ENCODE measurements at regions of chr12 and their contacts with region 1.

Region 1: DNA sequence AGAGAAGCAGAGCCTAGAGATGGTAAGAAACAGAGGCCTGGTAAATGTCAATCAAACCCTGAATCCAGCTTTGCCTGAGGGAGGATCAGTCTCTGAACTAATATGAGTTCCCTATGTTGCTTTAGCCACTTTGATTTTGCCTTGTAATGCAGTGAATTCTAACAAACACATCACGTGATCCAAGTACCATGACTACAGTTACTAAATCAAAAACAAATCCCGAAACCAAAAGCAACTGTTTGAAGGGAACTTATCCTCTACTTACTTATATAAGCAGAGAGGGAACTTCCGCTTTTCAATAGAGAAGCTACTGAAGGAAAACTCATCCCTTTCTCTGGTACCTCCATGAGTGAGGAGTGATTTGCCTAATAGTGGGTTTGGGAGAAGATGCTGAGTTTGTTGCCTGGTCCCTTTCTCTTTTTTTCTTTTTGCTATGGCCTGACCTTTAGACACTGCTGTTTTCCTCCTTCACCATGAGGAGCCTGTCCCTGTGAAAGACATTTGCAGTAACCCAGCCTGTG is 7.7 kb upstream of the PPTC7 start:
- DNase-seq: no peak
- H3K4me3 ChIP-seq: no peak overlapping the region
- H3K27ac ChIP-seq: peak overlapping the region; percentile 33; the same call in 1 of the 2 replicates
- H3K4me1 ChIP-seq: peaks cover 25% of the 10 kb centered on the region
- H3K27me3 ChIP-seq: no peaks in the 10 kb centered on the region
- CTCF ChIP-seq: no peak

Region 2: GRCh38 chr12:110444455-110444854 is 146.4 kb before region 1 on chr12:
- CTCF ChIA-PET with region 1: no interaction called
- POLR2A ChIA-PET with region 1: no interaction called
- intact Hi-C with region 1: no loop called
- DNase-seq: no peak
- H3K4me3 ChIP-seq: no peak overlapping the region
- H3K27ac ChIP-seq: no peak overlapping the region
- H3K4me1 ChIP-seq: 0 out of 2 replicates have a peak, but pooled peaks cover 4% of the 10 kb centered on the region
- H3K27me3 ChIP-seq: no peaks in the 10 kb centered on the region
- CTCF ChIP-seq: no peak

Region 3: DNA sequence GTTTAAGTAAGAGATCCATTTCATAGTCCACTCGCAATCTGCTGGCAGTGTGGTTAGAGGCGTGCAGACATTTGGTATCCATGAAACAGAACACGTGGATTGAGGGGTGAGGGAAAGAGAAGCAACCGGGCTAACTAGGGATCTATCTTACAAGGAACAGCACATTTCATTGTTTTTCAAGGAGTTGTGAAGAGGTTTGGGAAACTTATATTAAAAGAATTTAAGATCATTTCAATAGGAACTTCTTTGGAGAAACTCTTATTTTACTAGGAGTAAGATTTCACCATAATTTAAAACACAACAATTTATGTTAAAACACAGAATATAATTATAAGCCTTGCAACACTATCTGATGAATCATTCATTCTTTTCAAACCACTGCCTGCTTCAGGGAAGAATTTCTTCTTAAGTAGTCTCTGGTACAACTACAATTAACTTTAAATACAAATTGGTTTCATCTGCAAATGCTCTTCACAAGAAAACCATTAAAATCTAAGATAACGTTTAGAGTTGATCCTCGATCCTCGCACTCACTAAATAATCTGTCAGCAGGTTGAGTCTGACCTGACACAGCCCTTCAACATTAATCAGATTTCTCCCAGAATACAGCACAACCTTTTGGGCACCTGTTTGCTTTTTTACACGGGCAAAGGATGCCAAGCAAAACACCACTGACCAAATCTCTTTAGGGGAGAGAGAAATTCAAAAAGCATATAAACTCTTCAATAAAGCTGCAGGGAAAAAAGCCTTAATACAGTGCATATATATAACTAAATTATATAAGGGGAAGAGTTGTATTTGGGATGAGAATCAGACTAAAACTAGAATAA is 35.1 kb before region 1 on chr12:
- CTCF ChIA-PET with region 1: no interaction called
- POLR2A ChIA-PET with region 1: no interaction called
- intact Hi-C with region 1: loop called (anchors 5 kb)
- DNase-seq: peak in 1 of 2 experiments; percentile 43
- H3K4me3 ChIP-seq: no peak overlapping the region
- H3K27ac ChIP-seq: peak overlapping the region; percentile 58
- H3K4me1 ChIP-seq: peaks cover 24% of the 10 kb centered on the region
- H3K27me3 ChIP-seq: no peaks in the 10 kb centered on the region
- CTCF ChIP-seq: no peak

Region 4: DNA sequence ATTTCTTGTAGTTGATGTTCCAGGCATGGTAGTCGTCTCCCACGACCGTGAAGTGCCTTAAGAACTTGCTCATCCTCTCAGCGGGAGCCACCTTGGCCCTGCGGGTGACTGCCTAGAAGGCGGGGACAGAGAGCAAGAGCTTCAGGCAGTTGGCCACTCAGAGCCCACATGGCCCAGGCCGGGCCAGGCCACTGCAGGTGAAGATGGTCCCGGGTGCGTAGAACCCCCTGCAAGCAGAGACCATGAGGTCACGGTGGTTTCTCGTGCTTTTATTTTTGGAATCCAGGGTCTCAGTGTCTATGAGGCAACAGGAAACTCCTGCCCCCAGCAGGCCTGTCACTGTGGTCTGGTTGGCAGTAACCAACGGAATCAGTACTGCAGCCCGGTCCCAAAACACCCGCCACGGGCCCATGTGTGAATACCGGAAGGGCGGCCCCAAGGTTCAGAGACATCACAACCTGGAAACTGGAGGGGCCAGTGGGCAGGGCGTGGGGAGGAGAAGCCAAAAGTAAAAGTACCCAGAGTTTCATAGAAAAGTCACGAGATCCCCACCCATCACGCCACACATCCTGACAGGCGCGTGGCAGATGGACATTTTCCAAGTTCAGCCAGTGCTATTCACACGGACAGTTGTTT is 70.6 kb after region 1 on chr12:
- CTCF ChIA-PET with region 1: no interaction called
- POLR2A ChIA-PET with region 1: no interaction called
- intact Hi-C with region 1: no loop called
- DNase-seq: no peak
- H3K4me3 ChIP-seq: no peak overlapping the region
- H3K27ac ChIP-seq: no peak overlapping the region
- H3K4me1 ChIP-seq: no peaks in the 10 kb centered on the region
- H3K27me3 ChIP-seq: peaks cover 7% of the 10 kb centered on the region; the same call in 1 of the 2 replicates
- CTCF ChIP-seq: no peak

Region 5: DNA sequence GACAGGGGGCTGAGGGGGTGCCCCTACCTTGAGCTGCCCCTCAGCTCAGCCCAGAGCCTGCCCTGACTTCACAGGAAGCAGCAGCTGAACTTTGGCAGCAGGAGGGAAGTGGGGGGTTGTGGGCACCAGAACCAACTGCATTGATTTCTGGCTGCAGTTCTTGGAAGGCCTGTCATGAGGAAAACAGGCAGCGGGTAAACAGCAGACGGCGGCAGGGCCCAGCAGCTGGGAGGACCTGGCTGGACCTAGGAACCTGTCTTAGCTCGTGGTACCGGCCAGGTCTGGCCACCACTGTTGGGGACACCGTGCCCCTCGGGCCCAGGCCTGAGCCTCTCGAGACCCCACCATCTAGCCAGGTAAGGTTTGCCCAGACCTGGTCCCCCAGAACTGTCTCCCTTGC is 483.7 kb after region 1 on chr12:
- CTCF ChIA-PET with region 1: no interaction called
- POLR2A ChIA-PET with region 1: no interaction called
- intact Hi-C with region 1: no loop called
- DNase-seq: no peak
- H3K4me3 ChIP-seq: no peak overlapping the region
- H3K27ac ChIP-seq: no peak overlapping the region
- H3K4me1 ChIP-seq: no peaks in the 10 kb centered on the region
- H3K27me3 ChIP-seq: peaks cover 87% of the 10 kb centered on the region
- CTCF ChIP-seq: no peak

Measured in PC-9 (cell line).